ENCODE measurements at regions of chr5 and their contacts with region 1.

Region 1: GRCh38 chr5:119274767-119275130 is 81.1 kb upstream of the TNFAIP8 start:
- DNase-seq: peak; percentile 52
- ATAC-seq: peak; percentile 42
- H3K4me3 ChIP-seq: peak overlapping the region in 1 of 5 experiments; percentile 43
- H3K4me3 Mint-ChIP-seq: peak overlapping the region; percentile 75
- H3K27ac ChIP-seq: peak overlapping the region; percentile 78 to 91
- H3K27ac Mint-ChIP-seq: peak overlapping the region; percentile 95
- H3K4me1 ChIP-seq: peaks cover 94 to 97% of the 10 kb centered on the region in 2 donors
- H3K4me1 Mint-ChIP-seq: peaks cover 97% of the 10 kb centered on the region
- H3K27me3 ChIP-seq: no peaks in the 10 kb centered on the region
- H3K27me3 Mint-ChIP-seq: no peaks in the 10 kb centered on the region
- CTCF ChIP-seq: no peak

Region 2: GRCh38 chr5:119220576-119221197 is 54.1 kb before region 1 on chr5:
- CTCF ChIA-PET with region 1: no interaction called
- POLR2A ChIA-PET with region 1: no interaction called
- intact Hi-C with region 1: loop called (anchors 10 kb)
- DNase-seq: peak; percentile 63
- ATAC-seq: peak; percentile 92
- H3K4me3 ChIP-seq: no peak overlapping the region
- H3K4me3 Mint-ChIP-seq: peak overlapping the region; percentile 21
- H3K27ac ChIP-seq: peak overlapping the region; percentile 37 to 72
- H3K27ac Mint-ChIP-seq: peak overlapping the region; percentile 16
- H3K4me1 ChIP-seq: peaks cover 15 to 17% of the 10 kb centered on the region in 2 donors
- H3K4me1 Mint-ChIP-seq: peaks cover 21% of the 10 kb centered on the region
- H3K27me3 ChIP-seq: no peaks in the 10 kb centered on the region
- H3K27me3 Mint-ChIP-seq: no peaks in the 10 kb centered on the region
- CTCF ChIP-seq: no peak

Region 3: DNA sequence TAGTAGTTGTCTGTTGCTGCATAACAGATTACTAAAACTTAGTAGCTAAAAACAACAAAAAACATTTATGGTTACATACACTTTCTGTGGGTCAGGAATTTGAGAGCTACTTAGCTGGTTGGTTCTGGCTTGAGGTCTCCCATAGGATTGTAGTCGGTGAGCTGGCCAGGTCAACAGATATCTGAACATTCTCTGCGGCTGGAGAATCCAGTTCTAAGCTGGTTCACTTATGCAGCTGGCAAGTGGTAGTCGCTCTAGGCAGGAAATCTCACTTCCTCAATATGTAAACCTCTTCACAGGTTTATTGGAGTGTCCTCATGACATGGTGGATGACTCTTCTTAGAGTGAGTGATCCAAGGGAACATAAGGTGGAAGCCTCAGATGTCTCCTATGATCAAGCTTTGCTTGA is 15.4 kb after region 1 on chr5:
- CTCF ChIA-PET with region 1: interaction called, 15 read pairs
- POLR2A ChIA-PET with region 1: interaction called, 4 read pairs
- intact Hi-C with region 1: loop called (anchors 1 kb)
- DNase-seq: peak; percentile 78
- ATAC-seq: peak; percentile 88
- H3K4me3 ChIP-seq: peak overlapping the region in 3 of 5 experiments; percentile 13 to 20 (median 18)
- H3K4me3 Mint-ChIP-seq: peak overlapping the region; percentile 65
- H3K27ac ChIP-seq: peak overlapping the region; percentile 35 to 74
- H3K27ac Mint-ChIP-seq: peak overlapping the region; percentile 90
- H3K4me1 ChIP-seq: peaks cover 70 to 76% of the 10 kb centered on the region in 2 donors
- H3K4me1 Mint-ChIP-seq: peaks cover 83% of the 10 kb centered on the region
- H3K27me3 ChIP-seq: no peaks in the 10 kb centered on the region
- H3K27me3 Mint-ChIP-seq: no peaks in the 10 kb centered on the region
- CTCF ChIP-seq: no peak

Region 4: DNA sequence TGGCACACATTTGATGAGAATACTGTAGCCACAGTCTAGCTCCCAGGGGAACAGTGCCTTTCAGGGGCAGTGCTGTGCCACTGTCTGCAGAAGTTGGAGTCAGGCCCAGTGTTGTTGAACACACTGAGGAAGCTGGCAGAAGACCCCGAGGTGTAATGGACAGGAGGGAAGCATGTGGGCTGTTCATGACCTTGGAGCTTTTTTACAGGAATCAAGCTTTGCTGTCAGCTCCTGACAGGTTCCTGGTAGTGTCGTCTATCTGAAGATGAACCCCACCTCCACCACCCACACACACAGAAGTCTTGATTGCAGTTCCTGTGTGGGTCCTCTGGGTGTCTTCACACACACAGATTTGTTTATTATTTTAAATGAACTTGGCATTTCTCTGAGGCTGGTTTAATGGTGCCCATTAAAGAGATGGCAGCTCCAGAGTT is 40.8 kb after region 1 on chr5:
- CTCF ChIA-PET with region 1: interaction called, 22 read pairs
- POLR2A ChIA-PET with region 1: interaction called, 4 read pairs
- intact Hi-C with region 1: no loop called
- DNase-seq: peak; percentile 82
- ATAC-seq: peak; percentile 81
- H3K4me3 ChIP-seq: peak overlapping the region in 1 of 5 experiments; percentile 39
- H3K4me3 Mint-ChIP-seq: peak overlapping the region; percentile 66
- H3K27ac ChIP-seq: peak overlapping the region; percentile 57 to 65
- H3K27ac Mint-ChIP-seq: peak overlapping the region; percentile 90
- H3K4me1 ChIP-seq: peaks cover 95% of the 10 kb centered on the region in 2 donors
- H3K4me1 Mint-ChIP-seq: peaks cover 89% of the 10 kb centered on the region
- H3K27me3 ChIP-seq: no peaks in the 10 kb centered on the region
- H3K27me3 Mint-ChIP-seq: no peaks in the 10 kb centered on the region
- CTCF ChIP-seq: peak; percentile 68

Region 5: GRCh38 chr5:119340597-119341218 is 66.0 kb after region 1 on chr5:
- CTCF ChIA-PET with region 1: interaction called, 7 read pairs
- POLR2A ChIA-PET with region 1: interaction called, 4 read pairs
- intact Hi-C with region 1: loop called (anchors 1 kb)
- DNase-seq: peak; percentile 68
- ATAC-seq: peak; percentile 22
- H3K4me3 ChIP-seq: peak overlapping the region in 4 of 5 experiments; percentile 5 to 45 (median 22)
- H3K4me3 Mint-ChIP-seq: peak overlapping the region; percentile 85
- H3K27ac ChIP-seq: peak overlapping the region; percentile 87 to 91
- H3K27ac Mint-ChIP-seq: peak overlapping the region; percentile 95
- H3K4me1 ChIP-seq: peaks cover 95 to 96% of the 10 kb centered on the region in 2 donors
- H3K4me1 Mint-ChIP-seq: peaks cover 94% of the 10 kb centered on the region
- H3K27me3 ChIP-seq: no peaks in the 10 kb centered on the region
- H3K27me3 Mint-ChIP-seq: no peaks in the 10 kb centered on the region
- CTCF ChIP-seq: no peak

Region 6: GRCh38 chr5:119400245-119400644 is 125.5 kb after region 1 on chr5:
- CTCF ChIA-PET with region 1: no interaction called
- POLR2A ChIA-PET with region 1: no interaction called
- intact Hi-C with region 1: no loop called
- DNase-seq: no peak
- ATAC-seq: no peak
- H3K4me3 ChIP-seq: no peak overlapping the region
- H3K4me3 Mint-ChIP-seq: no peak overlapping the region
- H3K27ac ChIP-seq: peak overlapping the region; percentile 37 to 71
- H3K27ac Mint-ChIP-seq: peak overlapping the region; percentile 57
- H3K4me1 ChIP-seq: peaks cover 51 to 62% of the 10 kb centered on the region in 2 donors
- H3K4me1 Mint-ChIP-seq: peaks cover 83% of the 10 kb centered on the region
- H3K27me3 ChIP-seq: no peaks in the 10 kb centered on the region
- H3K27me3 Mint-ChIP-seq: no peaks in the 10 kb centered on the region
- CTCF ChIP-seq: no peak